Transverse colon (tissue), 4 donors: ENCODE measurements at regions of chr7 and their contacts with region 1.

Region 1: GRCh38 chr7:139798221-139798620 is 20.4 kb upstream of the HIPK2 start:
- DNase-seq: peak; percentile 62
- H3K4me3 ChIP-seq: no peak overlapping the region
- H3K27ac ChIP-seq: no peak overlapping the region
- H3K4me1 ChIP-seq: peaks cover 0 to 8% (median 0%) of the 10 kb centered on the region in 4 donors
- H3K27me3 ChIP-seq: no peaks in the 10 kb centered on the region
- CTCF ChIP-seq: no peak
- EP300 ChIP-seq: no peak
- POLR2A ChIP-seq: no peak

Region 2: GRCh38 chr7:138954545-138955475 is 843.4 kb before region 1 on chr7:
- in situ Hi-C with region 1: no loop called
- intact Hi-C with region 1: no loop called
- DNase-seq: no peak
- H3K4me3 ChIP-seq: no peak overlapping the region
- H3K27ac ChIP-seq: no peak overlapping the region
- H3K4me1 ChIP-seq: no peaks in the 10 kb centered on the region
- H3K27me3 ChIP-seq: no peaks in the 10 kb centered on the region
- CTCF ChIP-seq: no peak
- EP300 ChIP-seq: no peak
- POLR2A ChIP-seq: no peak

Region 3: DNA sequence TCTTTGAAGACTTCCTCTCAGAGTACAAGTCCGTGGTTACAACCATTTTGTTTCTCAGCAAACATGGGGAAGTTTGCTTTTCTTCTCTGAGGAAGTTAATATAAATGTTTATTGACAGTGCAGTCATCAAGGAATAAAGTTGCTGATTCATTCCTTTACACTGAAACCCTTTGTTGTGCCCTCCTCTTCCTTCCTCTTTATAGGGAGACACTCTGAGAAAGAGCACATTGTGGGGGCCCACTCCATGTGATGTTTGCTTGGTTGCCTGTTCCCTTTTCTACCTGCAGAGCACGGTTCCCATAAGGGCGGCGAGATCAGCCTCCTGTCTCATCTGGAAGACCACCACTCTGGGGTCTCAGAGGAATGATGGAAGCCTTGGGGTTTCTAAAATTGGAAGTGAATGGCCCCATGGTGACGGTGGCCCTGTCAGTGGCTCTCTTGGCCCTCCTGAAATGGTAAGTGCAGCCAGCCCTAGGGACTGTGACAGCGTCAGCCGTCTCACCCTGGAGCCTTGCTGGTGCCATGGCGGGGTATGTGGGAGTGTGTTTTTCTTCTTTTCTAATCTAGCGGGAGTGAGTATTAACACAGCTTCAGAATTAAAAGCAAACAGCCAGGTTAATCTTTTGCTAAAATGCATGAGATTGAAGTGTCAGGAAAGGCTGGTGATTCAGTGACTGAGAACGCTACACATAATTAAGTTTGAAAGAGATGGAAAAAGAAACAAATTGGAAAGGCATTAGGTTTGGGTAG is 31.0 kb after region 1 on chr7 and contains the start of gene TBXAS1:
- in situ Hi-C with region 1: no loop called
- intact Hi-C with region 1: loop called (anchors 1 kb)
- DNase-seq: peak; percentile 57
- H3K4me3 ChIP-seq: peak within 1 kb of the TSS in 3 of 4 donors; percentile 11 to 34 (median 18)
- H3K27ac ChIP-seq: peak within 1 kb of the TSS; percentile 48 to 80 (median 75)
- H3K4me1 ChIP-seq: peaks cover 0 to 22% (median 7%) of the 10 kb centered on the region in 4 donors
- H3K27me3 ChIP-seq: no peaks in the 10 kb centered on the region
- CTCF ChIP-seq: peak in 1 of 5 experiments; percentile 11
- EP300 ChIP-seq: no peak
- POLR2A ChIP-seq: peak; percentile 38
- total RNA-seq, gene TBXAS1: 9.0 to 22.2 (median 14.6) TPM

Region 4: GRCh38 chr7:139889186-139889871 is 91.1 kb after region 1 on chr7:
- in situ Hi-C with region 1: no loop called
- intact Hi-C with region 1: no loop called
- DNase-seq: no peak
- H3K4me3 ChIP-seq: no peak overlapping the region
- H3K27ac ChIP-seq: no peak overlapping the region
- H3K4me1 ChIP-seq: peaks cover 0 to 11% (median 2%) of the 10 kb centered on the region in 4 donors
- H3K27me3 ChIP-seq: no peaks in the 10 kb centered on the region
- CTCF ChIP-seq: no peak
- EP300 ChIP-seq: no peak
- POLR2A ChIP-seq: no peak